Dorsolateral prefrontal cortex (tissue), 120 donors: ENCODE measurements at regions of chr15 and their contacts with region 1.

Region 1: GRCh38 chr15:59313641-59314332 is 58.9 kb downstream of the MYO1E start:
- DNase-seq: peak in 6 of 10 donors; percentile 34 to 60 (median 46)
- H3K4me3 ChIP-seq: no peak overlapping the region
- H3K27ac ChIP-seq: peak overlapping the region in 43 of 59 donors; percentile 1 to 72 (median 42)
- H3K27me3 ChIP-seq: no peaks in the 10 kb centered on the region
- CTCF ChIP-seq: no peak

Region 2: DNA sequence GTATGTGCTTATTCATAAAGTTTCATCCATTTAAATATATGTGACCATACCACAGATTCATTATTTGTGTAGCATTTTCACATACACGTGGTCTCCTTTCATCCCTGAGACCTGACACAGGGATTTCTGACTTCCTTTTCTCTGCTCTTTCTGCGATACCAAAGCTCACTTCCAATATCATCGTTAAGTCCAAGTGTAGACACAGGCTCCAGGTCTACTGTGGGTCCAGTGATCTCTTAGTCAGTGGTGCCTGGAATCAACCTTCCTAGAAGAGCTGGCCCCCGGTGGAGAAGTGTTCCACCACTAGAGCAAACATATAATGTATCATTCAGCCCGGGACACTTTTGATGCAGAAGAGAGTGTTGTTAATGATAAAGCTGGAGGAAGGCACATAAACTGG is 34.8 kb before region 1 on chr15:
- intact Hi-C with region 1: loop called in 1 of 2 experiments (anchors 1 kb)
- DNase-seq: no peak
- H3K4me3 ChIP-seq: no peak overlapping the region
- H3K27ac ChIP-seq: peak overlapping the region in 58 of 59 donors; percentile 15 to 96 (median 84)
- H3K27me3 ChIP-seq: no peaks in the 10 kb centered on the region
- CTCF ChIP-seq: no peak

Region 3: GRCh38 chr15:59354417-59355031 is 40.7 kb after region 1 on chr15:
- intact Hi-C with region 1: loop called in 1 of 2 experiments (anchors 5 kb)
- DNase-seq: no peak
- H3K4me3 ChIP-seq: no peak overlapping the region
- H3K27ac ChIP-seq: no peak overlapping the region
- H3K27me3 ChIP-seq: no peaks in the 10 kb centered on the region
- CTCF ChIP-seq: no peak